HEK293 (cell line): ENCODE measurements at regions of chr10 and their contacts with region 1.

Region 1: DNA sequence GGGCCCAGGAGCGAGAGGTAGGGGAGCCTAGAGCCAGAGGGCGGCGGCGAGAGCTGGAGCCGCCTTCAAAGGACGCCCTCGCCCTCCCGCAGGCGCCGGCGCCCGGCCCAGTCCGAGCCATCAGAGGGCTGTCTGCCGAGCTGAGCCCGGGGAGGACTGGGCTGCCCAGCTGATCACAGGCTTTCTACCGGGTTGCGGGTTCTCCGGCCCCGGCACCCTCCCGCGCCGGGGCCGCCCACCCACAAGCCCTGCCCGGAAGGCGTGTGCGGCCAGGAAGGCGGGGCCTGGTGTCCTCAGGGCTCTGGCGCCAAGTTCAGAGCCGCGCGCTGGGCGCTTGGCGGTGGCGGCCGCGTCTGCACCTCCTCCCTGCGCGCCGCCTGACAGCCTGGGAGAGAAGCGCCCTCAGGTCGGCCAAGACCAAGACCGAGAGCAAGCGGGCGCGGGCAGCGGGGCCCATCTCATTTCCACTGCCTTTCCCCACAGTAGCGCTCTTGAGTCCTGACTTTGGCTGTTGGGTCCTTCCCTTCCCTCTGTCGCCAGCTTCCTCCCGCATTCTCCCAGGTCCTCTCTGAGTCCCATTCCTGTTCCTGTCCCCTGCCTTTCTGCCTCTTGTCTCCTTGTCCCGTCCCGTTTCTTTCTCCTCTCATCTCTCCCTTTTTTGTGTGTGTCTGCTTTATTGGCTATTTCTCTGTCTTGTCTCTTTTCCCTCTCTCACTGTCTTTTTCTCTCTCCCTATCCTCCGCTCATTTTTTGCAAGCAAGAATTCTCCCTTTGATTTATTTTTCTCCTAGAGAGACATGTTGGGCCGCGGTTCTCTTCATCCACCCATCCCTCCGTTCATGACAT is 60.6 kb upstream of the MSMB start:
- H3K4me3 ChIP-seq: peak overlapping the region; percentile 41
- H3K27ac ChIP-seq: no peak overlapping the region; the same call in 1 of the 2 replicates
- H3K4me1 ChIP-seq: 0 out of 2 replicates have a peak, but pooled peaks cover 3% of the 10 kb centered on the region
- CTCF ChIP-seq: peak; percentile 94

Region 2: GRCh38 chr10:46284293-46285229 is 177.9 kb after region 1 on chr10:
- CTCF ChIA-PET with region 1: no interaction called
- POLR2A ChIA-PET with region 1: interaction called, 32 read pairs
- H3K4me3 ChIP-seq: peak overlapping the region; percentile 45
- H3K27ac ChIP-seq: peak overlapping the region; percentile 61; the same call in 1 of the 2 replicates
- H3K4me1 ChIP-seq: no peaks in the 10 kb centered on the region
- CTCF ChIP-seq: 0 out of 2 replicates have a peak, but pooled peaks have one; percentile 14